ENCODE measurements at regions of chr4 and their contacts with region 1.

Region 1: GRCh38 chr4:48830706-48831531 is at the start of gene OCIAD1:
- DNase-seq: peak; percentile 99
- H3K4me3 ChIP-seq: peak within 1 kb of the TSS; percentile 67 to 90 (median 73)
- H3K27ac ChIP-seq: peak within 1 kb of the TSS; percentile 89 to 97 (median 90)
- H3K4me1 ChIP-seq: peaks cover 0 to 22% (median 16%) of the 10 kb centered on the region in 4 donors
- H3K27me3 ChIP-seq: no peaks in the 10 kb centered on the region
- CTCF ChIP-seq: no peak
- EP300 ChIP-seq: peak in 1 of 4 donors; percentile 71
- POLR2A ChIP-seq: peak in 1 of 2 donors; percentile 9
- total RNA-seq, gene OCIAD1: 96.1 to 133 (median 110) TPM

Region 2: GRCh38 chr4:47914220-47914925 is 916.5 kb before region 1 on chr4 and contains the start of gene NFXL1:
- intact Hi-C with region 1: loop called (anchors 5 kb)
- DNase-seq: peak; percentile 99
- H3K4me3 ChIP-seq: peak within 1 kb of the TSS; percentile 75 to 87 (median 82)
- H3K27ac ChIP-seq: peak within 1 kb of the TSS; percentile 75 to 83 (median 80)
- H3K4me1 ChIP-seq: peaks cover 0 to 28% (median 13%) of the 10 kb centered on the region in 4 donors
- H3K27me3 ChIP-seq: no peaks in the 10 kb centered on the region
- CTCF ChIP-seq: no peak
- EP300 ChIP-seq: no peak
- POLR2A ChIP-seq: peak; percentile 56 to 74
- total RNA-seq, gene NFXL1: 8.0 to 20.5 (median 15.8) TPM

Region 3: DNA sequence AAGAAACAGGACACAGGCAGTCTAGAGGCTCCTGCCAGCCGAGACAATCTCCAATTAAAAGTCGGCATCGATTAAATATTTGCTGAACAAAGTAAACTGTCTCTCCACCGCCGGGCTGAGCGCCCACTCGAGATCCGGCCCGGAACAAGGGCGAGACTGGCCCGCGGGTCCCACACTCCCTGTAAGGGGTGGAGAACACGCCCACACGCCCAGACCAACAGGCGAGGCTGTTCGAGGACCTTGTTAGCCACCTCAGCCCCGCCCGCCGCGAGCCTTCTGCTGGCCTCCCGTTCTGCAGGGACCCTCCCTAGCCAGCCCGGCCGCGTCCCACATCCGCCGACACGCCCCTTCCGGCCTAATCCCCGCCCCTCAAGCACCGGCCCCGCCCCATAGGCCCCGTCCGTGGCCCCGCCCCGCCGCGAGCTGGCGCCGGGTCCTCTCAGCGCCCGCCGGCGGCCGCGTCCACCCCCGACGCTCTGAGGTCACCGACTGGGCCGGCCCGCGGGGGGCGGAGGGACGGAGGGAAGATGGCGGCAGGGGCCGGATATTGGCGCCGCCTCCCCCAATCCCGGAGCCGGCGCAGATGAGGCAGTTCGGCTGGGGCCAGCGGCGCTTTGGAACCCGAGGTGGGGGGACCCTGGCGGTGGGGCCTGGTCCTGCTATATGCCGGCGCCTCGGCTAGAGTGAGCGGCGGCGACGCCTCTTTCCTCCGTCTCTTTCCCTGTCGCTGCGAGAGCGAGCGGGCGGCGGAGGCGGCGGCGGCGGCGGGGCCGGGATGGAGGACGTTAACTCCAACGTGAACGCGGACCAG is 489.7 kb before region 1 on chr4 and contains the start of gene SLAIN2:
- intact Hi-C with region 1: loop called (anchors 2 kb)
- DNase-seq: peak; percentile 99
- H3K4me3 ChIP-seq: peak within 1 kb of the TSS; percentile 80 to 97 (median 91)
- H3K27ac ChIP-seq: peak within 1 kb of the TSS; percentile 92 to 97 (median 96)
- H3K4me1 ChIP-seq: peaks cover 0 to 49% (median 36%) of the 10 kb centered on the region in 4 donors
- H3K27me3 ChIP-seq: no peaks in the 10 kb centered on the region
- CTCF ChIP-seq: peak; percentile 10 to 31 (median 25)
- EP300 ChIP-seq: no peak
- POLR2A ChIP-seq: peak; percentile 63 to 76
- total RNA-seq, gene SLAIN2: 95.9 to 167 (median 112) TPM

Region 4: GRCh38 chr4:48578132-48578968 is 252.6 kb before region 1 on chr4:
- intact Hi-C with region 1: loop called (anchors 2 kb)
- DNase-seq: peak; percentile 73
- H3K4me3 ChIP-seq: no peak overlapping the region
- H3K27ac ChIP-seq: peak overlapping the region in 1 of 4 donors; percentile 12
- H3K4me1 ChIP-seq: no peaks in the 10 kb centered on the region
- H3K27me3 ChIP-seq: no peaks in the 10 kb centered on the region
- CTCF ChIP-seq: peak; percentile 79 to 87 (median 86)
- EP300 ChIP-seq: no peak
- POLR2A ChIP-seq: no peak

Region 5: DNA sequence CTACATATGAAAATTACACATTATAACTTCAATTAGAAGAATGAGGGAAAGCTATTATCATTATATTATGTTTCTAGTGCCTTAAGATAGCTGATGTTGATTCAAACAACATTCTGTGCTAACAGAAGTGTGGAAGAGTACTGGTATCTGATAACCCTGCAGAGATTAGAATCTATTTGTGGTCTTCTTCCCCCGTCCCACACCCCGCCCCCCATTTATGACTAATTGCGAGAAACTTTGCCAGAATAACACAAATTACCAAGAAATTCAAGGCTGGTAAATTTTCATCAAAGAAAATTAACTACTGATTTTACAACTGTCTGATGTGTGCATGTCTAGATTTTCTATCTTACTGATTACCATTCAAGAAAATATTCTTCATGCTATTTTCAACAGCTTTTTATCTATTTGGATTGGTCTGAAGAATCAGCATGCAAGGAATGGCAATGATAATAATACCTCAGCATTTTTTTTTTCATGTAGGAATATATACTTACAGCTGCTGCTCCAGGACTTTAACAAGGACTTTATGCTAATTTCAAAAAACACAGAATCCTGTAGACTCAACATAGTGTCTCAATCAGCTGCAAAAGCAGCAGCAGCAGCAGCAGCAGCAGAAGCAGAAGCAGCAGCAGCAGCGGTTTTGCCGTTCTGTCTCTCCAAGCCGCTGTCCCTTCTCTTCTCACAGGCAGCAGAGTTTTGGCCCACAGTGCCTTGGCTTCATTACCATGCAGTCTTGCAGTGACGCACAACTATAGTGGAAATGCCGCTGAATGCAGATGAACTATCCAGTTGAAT is 177.5 kb before region 1 on chr4:
- intact Hi-C with region 1: loop called (anchors 10 kb)
- DNase-seq: peak; percentile 73
- H3K4me3 ChIP-seq: peak overlapping the region in 1 of 4 donors; percentile 5
- H3K27ac ChIP-seq: peak overlapping the region in 1 of 4 donors; percentile 39
- H3K4me1 ChIP-seq: peaks cover 0 to 28% (median 26%) of the 10 kb centered on the region in 4 donors
- H3K27me3 ChIP-seq: no peaks in the 10 kb centered on the region
- CTCF ChIP-seq: no peak
- EP300 ChIP-seq: no peak
- POLR2A ChIP-seq: no peak

Region 6: GRCh38 chr4:48779998-48780742 is 50.7 kb before region 1 on chr4 and contains the start of gene FRYL:
- intact Hi-C with region 1: loop called (anchors 1 kb)
- DNase-seq: peak; percentile 100
- H3K4me3 ChIP-seq: peak within 1 kb of the TSS; percentile 74 to 96 (median 95)
- H3K27ac ChIP-seq: peak within 1 kb of the TSS; percentile 94 to 99 (median 98)
- H3K4me1 ChIP-seq: peaks cover 0 to 39% (median 32%) of the 10 kb centered on the region in 4 donors
- H3K27me3 ChIP-seq: no peaks in the 10 kb centered on the region
- CTCF ChIP-seq: no peak
- EP300 ChIP-seq: no peak
- POLR2A ChIP-seq: peak; percentile 60 to 64
- total RNA-seq, gene FRYL: 44.9 to 72.4 (median 63.2) TPM